ENCODE measurements at regions of chr12 and their contacts with region 1.

Region 1: DNA sequence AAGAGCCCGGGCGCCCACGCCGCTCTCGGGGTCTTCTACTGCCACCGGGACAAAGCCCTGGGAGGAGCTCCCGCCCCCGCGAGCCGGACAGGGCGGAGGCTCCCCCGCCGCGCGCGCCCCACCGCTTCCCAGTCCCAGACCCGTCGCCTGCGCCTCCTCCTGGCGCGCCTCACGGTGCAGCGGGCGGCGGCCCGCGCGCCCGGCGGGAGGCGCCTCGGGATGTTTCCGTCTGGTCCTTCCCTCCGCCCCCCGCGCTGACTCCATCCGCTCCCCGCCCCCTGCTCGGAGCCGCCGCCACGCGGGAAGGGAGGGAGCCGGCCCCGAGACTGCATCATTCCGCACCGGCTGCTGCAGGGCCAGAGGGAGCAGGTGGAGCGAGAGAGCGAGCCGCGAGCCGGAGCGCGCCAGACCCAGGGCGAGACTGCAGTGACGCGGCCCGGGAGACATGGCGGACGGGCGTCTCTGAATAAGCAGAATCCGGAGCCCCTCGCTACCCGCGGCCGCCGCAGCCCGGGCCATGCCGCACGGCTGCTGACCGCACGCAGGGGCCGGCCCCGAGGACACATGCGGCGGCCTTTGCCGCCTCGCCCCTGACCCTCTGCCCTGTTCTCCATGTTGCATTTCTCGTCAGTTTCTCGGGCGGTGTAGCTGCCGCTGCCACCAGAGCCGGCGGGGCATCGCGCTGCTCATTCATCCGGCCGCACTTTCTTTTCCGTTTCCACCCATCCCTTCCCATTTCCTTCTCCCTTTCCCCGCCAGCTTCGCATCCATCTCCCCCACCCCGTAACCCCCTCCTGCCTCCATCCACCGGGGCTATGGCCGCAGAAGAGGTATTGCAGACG is at the start of gene BICD1:
- DNase-seq: peak; percentile 32 to 85 (median 74)
- ATAC-seq: peak; percentile 85
- H3K4me3 ChIP-seq: peak within 1 kb of the TSS; percentile 55 to 84
- H3K4me3 Mint-ChIP-seq: peak within 1 kb of the TSS; percentile 88
- H3K27ac ChIP-seq: peak within 1 kb of the TSS; percentile 16 to 61
- H3K27ac Mint-ChIP-seq: peak within 1 kb of the TSS; percentile 88
- H3K4me1 ChIP-seq: peaks cover 17% of the 10 kb centered on the region
- H3K4me1 Mint-ChIP-seq: peaks cover 30% of the 10 kb centered on the region
- H3K27me3 ChIP-seq: no peaks in the 10 kb centered on the region
- H3K27me3 Mint-ChIP-seq: no peaks in the 10 kb centered on the region
- CTCF ChIP-seq: peak; percentile 17
- total RNA-seq, gene BICD1: 7.0 to 7.2 TPM

Region 2: DNA sequence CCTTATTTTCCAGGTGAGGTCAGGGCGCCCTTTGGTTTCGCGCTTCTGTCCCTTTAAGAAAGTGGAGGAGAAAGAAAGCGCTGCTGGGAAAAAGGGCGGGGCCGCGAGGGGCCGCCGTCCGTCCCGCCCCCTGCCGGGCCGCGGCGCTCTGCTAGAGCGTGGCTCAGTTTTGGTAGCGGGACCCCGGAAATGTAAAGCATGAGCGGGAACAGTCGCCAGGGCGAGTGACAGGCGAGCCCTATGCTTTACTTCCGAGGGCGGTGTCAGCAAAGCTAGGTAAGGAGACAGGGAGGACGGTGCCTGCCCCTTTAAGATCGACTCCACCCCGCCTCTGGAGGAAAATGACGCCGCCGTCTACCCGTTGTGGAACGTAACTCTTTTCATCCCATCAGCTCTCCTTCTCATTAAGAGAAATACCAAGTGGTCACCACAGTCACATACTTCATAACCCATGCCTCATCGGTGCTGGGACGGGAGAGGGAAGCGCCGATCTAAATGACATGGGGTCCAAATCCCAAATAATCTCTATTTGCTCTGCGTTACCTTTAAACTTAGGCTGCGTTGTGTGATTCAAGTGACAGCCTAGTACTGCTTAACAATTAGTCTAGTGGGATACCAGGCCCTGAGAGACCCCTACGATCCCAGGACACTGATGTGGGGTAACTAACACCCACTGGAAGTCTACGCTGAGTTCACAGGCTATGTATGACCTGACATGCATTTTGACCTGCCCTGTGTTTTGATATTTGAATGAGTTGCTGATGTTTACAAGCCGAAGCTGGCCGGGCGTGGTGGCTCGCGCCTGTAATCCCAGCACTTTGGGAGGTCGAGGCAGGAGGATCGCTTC is 447.4 kb before region 1 on chr12 and contains the start of gene ETFBKMT:
- CTCF ChIA-PET with region 1: no interaction called
- POLR2A ChIA-PET with region 1: no interaction called
- intact Hi-C with region 1: loop called (anchors 2 to 5 kb)
- DNase-seq: peak; percentile 84 to 97 (median 92)
- ATAC-seq: peak; percentile 99
- H3K4me3 ChIP-seq: peak within 1 kb of the TSS; percentile 82 to 87
- H3K4me3 Mint-ChIP-seq: peak within 1 kb of the TSS; percentile 98
- H3K27ac ChIP-seq: peak within 1 kb of the TSS; percentile 89 to 92
- H3K27ac Mint-ChIP-seq: peak within 1 kb of the TSS; percentile 100
- H3K4me1 ChIP-seq: peaks cover 11% of the 10 kb centered on the region
- H3K4me1 Mint-ChIP-seq: peaks cover 14% of the 10 kb centered on the region
- H3K27me3 ChIP-seq: no peaks in the 10 kb centered on the region
- H3K27me3 Mint-ChIP-seq: no peaks in the 10 kb centered on the region
- CTCF ChIP-seq: peak; percentile 22
- total RNA-seq, gene ETFBKMT: 0.41 to 1.0 TPM

Region 3: GRCh38 chr12:32139064-32139421 is 32.3 kb after region 1 on chr12:
- CTCF ChIA-PET with region 1: interaction called, 5 read pairs
- POLR2A ChIA-PET with region 1: interaction called, 3 read pairs
- intact Hi-C with region 1: loop called in 1 of 2 experiments (anchors 1 kb)
- DNase-seq: peak in 6 of 9 experiments; percentile 6 to 54 (median 20)
- ATAC-seq: peak; percentile 71
- H3K4me3 ChIP-seq: peak overlapping the region; percentile 32 to 34
- H3K4me3 Mint-ChIP-seq: peak overlapping the region; percentile 91
- H3K27ac ChIP-seq: no peak overlapping the region
- H3K27ac Mint-ChIP-seq: peak overlapping the region; percentile 89
- H3K4me1 ChIP-seq: peaks cover 7% of the 10 kb centered on the region
- H3K4me1 Mint-ChIP-seq: peaks cover 27% of the 10 kb centered on the region
- H3K27me3 ChIP-seq: no peaks in the 10 kb centered on the region
- H3K27me3 Mint-ChIP-seq: no peaks in the 10 kb centered on the region
- CTCF ChIP-seq: no peak

Region 4: GRCh38 chr12:32302218-32303173 is 195.8 kb after region 1 on chr12:
- CTCF ChIA-PET with region 1: no interaction called
- POLR2A ChIA-PET with region 1: no interaction called
- intact Hi-C with region 1: loop called in 1 of 2 experiments (anchors 5 kb)
- DNase-seq: peak in 1 of 9 experiments; percentile 35
- ATAC-seq: no peak
- H3K4me3 ChIP-seq: no peak overlapping the region
- H3K4me3 Mint-ChIP-seq: no peak overlapping the region
- H3K27ac ChIP-seq: no peak overlapping the region
- H3K27ac Mint-ChIP-seq: no peak overlapping the region
- H3K4me1 ChIP-seq: no peaks in the 10 kb centered on the region
- H3K4me1 Mint-ChIP-seq: peaks cover 5% of the 10 kb centered on the region
- H3K27me3 ChIP-seq: no peaks in the 10 kb centered on the region
- H3K27me3 Mint-ChIP-seq: no peaks in the 10 kb centered on the region
- CTCF ChIP-seq: peak; percentile 21

Measured in CD8-positive, alpha-beta T cell (primary cell).